PC-9 (cell line): ENCODE measurements at regions of chr10 and their contacts with region 1.

Region 1: DNA sequence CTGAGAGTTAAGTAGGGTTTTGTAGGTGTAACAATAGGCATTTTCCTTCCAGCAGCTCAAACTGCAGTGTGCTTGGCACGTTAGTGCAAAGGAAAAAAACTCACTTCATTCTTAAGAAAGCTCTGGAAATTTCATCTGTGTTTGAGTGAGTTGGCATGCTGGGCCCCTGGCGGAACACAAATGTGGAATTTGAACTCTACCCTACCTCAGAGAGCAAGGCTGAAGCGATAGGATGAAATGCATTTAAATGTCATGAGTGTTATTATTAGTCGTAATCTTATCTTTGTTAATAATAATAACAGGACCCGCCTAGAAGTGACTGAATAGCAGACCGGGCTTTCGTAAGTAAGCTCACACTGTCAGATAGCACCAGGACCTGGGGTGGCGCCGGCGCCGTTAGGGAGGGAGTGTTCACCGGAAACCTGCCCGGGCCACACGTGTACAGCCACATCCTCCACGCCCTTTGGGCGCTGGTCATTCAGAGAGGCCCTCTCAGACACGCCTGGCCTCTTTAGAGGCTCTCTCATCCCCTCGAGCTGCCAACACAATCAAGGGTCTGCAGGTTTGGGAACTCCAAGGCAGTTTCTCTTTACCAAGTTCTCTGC is 63.5 kb downstream of the GRK5 start:
- DNase-seq: peak; percentile 41 to 52
- H3K4me3 ChIP-seq: peak overlapping the region; percentile 33; the same call in 1 of the 2 replicates
- H3K27ac ChIP-seq: peak overlapping the region; percentile 82
- H3K4me1 ChIP-seq: peaks cover 28% of the 10 kb centered on the region
- H3K27me3 ChIP-seq: no peaks in the 10 kb centered on the region
- CTCF ChIP-seq: no peak

Region 2: DNA sequence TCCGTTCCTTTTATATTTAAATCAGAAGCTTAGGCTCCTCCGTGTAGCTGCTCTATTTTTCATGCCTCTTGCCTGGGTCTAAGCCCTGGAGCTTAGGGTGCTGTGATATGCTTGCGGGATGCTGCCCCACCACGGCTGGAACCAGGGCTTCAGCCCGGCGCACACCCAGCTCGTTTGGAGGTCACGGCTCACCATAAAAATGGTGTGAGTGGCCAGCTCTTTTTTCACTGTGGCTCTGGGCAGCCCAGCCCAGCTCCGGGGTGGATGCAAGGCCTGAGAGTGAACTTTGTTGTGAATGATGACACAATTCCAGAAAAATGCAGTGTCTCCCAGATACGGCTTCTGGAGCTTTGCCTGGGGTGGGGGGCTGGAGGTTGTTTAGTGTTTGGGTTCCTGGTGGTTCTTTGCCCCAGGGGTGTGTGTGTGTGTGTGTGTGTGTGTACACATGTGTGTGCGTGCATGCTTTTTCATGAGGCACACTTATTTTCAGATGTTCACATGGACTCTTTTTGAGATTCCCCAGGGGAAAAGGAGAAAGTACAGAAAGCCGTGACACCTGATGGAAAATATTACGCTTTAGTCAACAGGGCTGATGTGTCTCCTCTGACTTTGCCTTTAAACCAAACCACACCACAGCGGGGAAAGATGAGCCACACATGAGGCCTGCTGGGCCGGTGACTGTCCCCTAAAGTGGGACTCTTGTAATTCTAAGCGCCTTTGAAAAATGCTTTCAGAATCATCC is 17.3 kb before region 1 on chr10:
- CTCF ChIA-PET with region 1: no interaction called
- POLR2A ChIA-PET with region 1: no interaction called
- intact Hi-C with region 1: loop called (anchors 2 kb)
- DNase-seq: peak; percentile 73 to 80
- H3K4me3 ChIP-seq: peak overlapping the region; percentile 24; the same call in 1 of the 2 replicates
- H3K27ac ChIP-seq: peak overlapping the region; percentile 97
- H3K4me1 ChIP-seq: peaks cover 40% of the 10 kb centered on the region
- H3K27me3 ChIP-seq: no peaks in the 10 kb centered on the region
- CTCF ChIP-seq: no peak

Region 3: DNA sequence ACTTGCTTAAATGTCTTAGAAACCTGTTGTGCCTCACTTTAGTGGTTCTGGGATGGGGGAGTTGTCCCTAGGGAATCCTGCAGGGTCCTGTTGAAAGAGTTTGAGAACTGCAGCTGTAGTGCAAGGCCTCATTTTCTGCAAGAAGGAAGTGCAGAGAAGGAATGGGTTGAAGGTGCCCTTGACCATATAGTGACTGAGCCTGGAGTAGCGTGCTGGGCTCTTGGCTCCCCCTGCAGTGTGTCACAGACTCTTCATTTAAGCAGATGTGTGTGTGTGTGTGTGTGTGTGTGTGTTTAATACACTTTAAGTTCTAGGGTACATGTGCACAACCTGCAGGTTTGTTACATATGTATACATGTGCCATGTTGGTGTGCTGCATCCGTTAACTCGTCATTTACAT is 28.7 kb after region 1 on chr10:
- CTCF ChIA-PET with region 1: no interaction called
- POLR2A ChIA-PET with region 1: no interaction called
- intact Hi-C with region 1: no loop called
- DNase-seq: no peak
- H3K4me3 ChIP-seq: no peak overlapping the region
- H3K27ac ChIP-seq: no peak overlapping the region
- H3K4me1 ChIP-seq: peaks cover 35% of the 10 kb centered on the region
- H3K27me3 ChIP-seq: no peaks in the 10 kb centered on the region
- CTCF ChIP-seq: no peak

Region 4: DNA sequence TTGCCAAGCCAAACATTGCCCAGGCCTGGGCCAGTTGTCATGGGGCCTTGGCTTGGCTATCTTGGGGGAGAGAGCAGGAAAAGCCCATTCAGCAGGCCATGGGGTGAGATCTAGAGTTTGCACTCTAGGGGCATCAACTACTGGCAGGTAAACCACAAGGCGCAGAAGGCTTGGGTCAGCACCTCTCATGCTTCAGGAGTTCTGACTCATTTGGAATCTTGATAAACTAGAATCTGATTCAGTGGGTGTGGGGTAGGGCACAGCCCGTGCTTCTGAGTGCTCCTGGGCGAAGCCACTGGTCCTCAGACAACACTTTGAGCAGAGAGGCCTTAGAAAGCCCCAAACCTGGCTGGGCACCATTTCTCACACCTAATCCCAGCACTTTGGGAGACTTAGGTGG is 190.5 kb after region 1 on chr10:
- CTCF ChIA-PET with region 1: no interaction called
- POLR2A ChIA-PET with region 1: no interaction called
- intact Hi-C with region 1: loop called (anchors 1 kb)
- DNase-seq: peak; percentile 77 to 92
- H3K4me3 ChIP-seq: peak overlapping the region; percentile 13; the same call in 1 of the 2 replicates
- H3K27ac ChIP-seq: peak overlapping the region; percentile 90
- H3K4me1 ChIP-seq: peaks cover 41% of the 10 kb centered on the region
- H3K27me3 ChIP-seq: no peaks in the 10 kb centered on the region
- CTCF ChIP-seq: no peak